ENCODE measurements at regions of chr1 and their contacts with region 1.

Region 1: GRCh38 chr1:229461032-229461668 is 27.3 kb upstream of the ACTA1 start:
- DNase-seq: peak; percentile 51 to 57
- ATAC-seq: peak; percentile 77 to 96 (median 94)
- H3K4me3 ChIP-seq: no peak overlapping the region
- H3K27ac ChIP-seq: peak overlapping the region in 7 of 10 donors; percentile 13 to 73 (median 67)
- H3K4me1 ChIP-seq: peaks cover 0 to 6% (median 0%) of the 10 kb centered on the region in 9 donors
- H3K27me3 ChIP-seq: no peaks in the 10 kb centered on the region
- CTCF ChIP-seq: no peak

Region 2: GRCh38 chr1:229370601-229371021 is 90.5 kb before region 1 on chr1:
- intact Hi-C with region 1: loop called in 3 of 10 experiments (anchors 5 to 10 kb)
- DNase-seq: peak; percentile 63 to 78
- ATAC-seq: peak; percentile 90 to 99 (median 96)
- H3K4me3 ChIP-seq: no peak overlapping the region
- H3K27ac ChIP-seq: peak overlapping the region in 6 of 10 donors; percentile 13 to 69 (median 58)
- H3K4me1 ChIP-seq: peaks cover 0 to 8% (median 0%) of the 10 kb centered on the region in 9 donors
- H3K27me3 ChIP-seq: peaks cover 0 to 13% (median 0%) of the 10 kb centered on the region in 7 donors
- CTCF ChIP-seq: peak in 6 of 9 donors; percentile 15 to 49 (median 40)

Region 3: DNA sequence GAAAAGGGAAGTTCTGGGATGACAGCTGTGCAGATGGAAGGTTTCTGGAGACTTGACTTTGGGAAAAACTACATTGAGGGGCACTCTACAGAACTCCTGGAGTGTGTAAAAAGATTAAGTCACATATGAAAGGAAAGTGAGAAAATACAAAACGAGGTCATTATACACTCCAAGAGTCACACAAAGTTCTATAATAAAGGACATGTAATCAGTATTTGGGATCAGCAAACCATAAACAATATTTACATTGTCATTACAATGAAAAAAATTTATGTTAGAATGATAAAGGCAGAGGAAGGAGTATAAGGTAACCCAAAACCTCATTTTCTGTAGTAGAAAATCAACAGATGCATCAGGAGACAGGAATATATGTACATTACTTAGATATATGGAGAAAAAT is 24.2 kb after region 1 on chr1:
- intact Hi-C with region 1: loop called in 1 of 10 experiments (anchors 1 kb)
- DNase-seq: no peak
- ATAC-seq: no peak
- H3K4me3 ChIP-seq: no peak overlapping the region
- H3K27ac ChIP-seq: no peak overlapping the region
- H3K4me1 ChIP-seq: peaks cover 0 to 12% (median 0%) of the 10 kb centered on the region in 9 donors
- H3K27me3 ChIP-seq: no peaks in the 10 kb centered on the region
- CTCF ChIP-seq: no peak